Right ventricle myocardium inferior (tissue), 1 donor: ENCODE measurements at regions of chr3 and their contacts with region 1.

Region 1: DNA sequence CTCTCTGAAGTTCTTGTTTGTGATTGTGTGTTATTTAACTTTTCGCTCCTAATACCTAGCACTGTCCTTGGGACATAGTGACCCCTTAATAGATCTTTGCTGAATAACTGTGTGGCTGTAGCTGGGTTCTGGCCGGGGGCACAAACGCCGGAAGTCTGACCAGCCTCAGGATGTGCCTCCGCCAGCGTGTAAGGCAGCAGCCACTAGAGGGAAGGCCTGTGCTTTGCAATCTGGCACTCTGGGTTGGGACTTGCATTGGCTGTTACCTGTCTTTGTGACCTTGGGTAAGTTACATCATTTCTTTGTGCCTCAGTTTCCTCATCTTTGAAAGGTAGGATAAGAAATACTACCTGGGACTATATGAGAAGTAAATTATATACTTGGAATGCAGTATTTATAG is 158.7 kb downstream of the GHSR start:
- DNase-seq: peak; percentile 65
- ATAC-seq: no peak

Region 2: GRCh38 chr3:172256101-172256734 is 33.4 kb before region 1 on chr3:
- intact Hi-C with region 1: loop called (anchors 5 kb)
- DNase-seq: no peak
- ATAC-seq: peak; percentile 85

Region 3: DNA sequence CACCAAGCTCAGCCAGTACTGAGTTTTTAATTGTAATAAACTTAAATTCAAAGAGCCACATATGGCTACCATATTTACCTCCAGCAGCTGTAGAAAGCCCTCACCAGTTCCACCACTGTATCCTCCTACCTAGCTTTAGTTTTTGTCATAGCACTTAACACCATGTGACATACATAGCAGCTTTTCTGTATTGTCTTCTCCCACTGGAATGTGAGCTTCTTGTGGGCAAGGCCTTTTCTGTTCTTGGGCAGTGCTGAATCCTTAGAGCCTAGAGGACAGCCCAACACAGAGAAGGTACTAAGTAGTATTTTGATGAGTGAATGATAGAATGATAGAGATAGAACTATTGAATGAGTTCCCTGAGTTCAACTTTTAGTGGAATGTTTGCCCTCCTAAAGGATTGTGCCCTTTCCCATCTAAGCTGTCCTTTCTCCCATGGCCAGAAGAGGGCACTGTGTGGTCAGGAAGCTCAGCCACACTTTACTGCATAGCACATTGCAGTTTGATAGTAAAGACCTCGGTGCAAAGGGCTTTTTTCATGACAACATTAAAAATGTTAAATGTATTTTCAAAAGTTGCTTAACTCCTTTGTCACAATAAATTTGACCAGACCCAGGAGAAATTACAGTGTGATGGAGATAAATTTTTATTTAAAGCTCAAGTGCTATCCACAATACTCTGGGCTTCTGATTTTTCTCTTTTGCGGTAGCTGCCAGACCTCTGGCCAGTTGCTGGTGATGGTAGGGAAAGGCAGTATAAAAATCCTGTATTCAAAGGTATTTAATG is 42.9 kb after region 1 on chr3:
- intact Hi-C with region 1: loop called (anchors 5 kb)
- DNase-seq: no peak
- ATAC-seq: peak; percentile 84